ENCODE measurements at regions of chr19 and their contacts with region 1.

Region 1: GRCh38 chr19:34145741-34146202 is 26.5 kb upstream of the LSM14A start:
- DNase-seq: no peak
- H3K4me3 ChIP-seq: no peak overlapping the region
- H3K27ac ChIP-seq: no peak overlapping the region
- H3K4me1 ChIP-seq: no peaks in the 10 kb centered on the region
- H3K27me3 ChIP-seq: no peaks in the 10 kb centered on the region
- CTCF ChIP-seq: peak; percentile 56 to 80 (median 73)
- POLR2A ChIP-seq: no peak

Region 2: GRCh38 chr19:34041925-34042521 is 103.7 kb before region 1 on chr19:
- intact Hi-C with region 1: loop called (anchors 10 kb)
- DNase-seq: peak; percentile 87
- H3K4me3 ChIP-seq: no peak overlapping the region
- H3K27ac ChIP-seq: no peak overlapping the region
- H3K4me1 ChIP-seq: peaks cover 0 to 6% (median 0%) of the 10 kb centered on the region in 6 donors
- H3K27me3 ChIP-seq: peaks cover 0 to 2% (median 0%) of the 10 kb centered on the region in 7 donors
- CTCF ChIP-seq: peak; percentile 19 to 88 (median 74)
- POLR2A ChIP-seq: no peak

Region 3: GRCh38 chr19:34082289-34083077 is 63.3 kb before region 1 on chr19:
- intact Hi-C with region 1: no loop called
- DNase-seq: no peak
- H3K4me3 ChIP-seq: no peak overlapping the region
- H3K27ac ChIP-seq: no peak overlapping the region
- H3K4me1 ChIP-seq: no peaks in the 10 kb centered on the region
- H3K27me3 ChIP-seq: peaks cover 0 to 18% (median 0%) of the 10 kb centered on the region in 7 donors
- CTCF ChIP-seq: no peak
- POLR2A ChIP-seq: no peak

Region 4: GRCh38 chr19:34201133-34201532 is 55.4 kb after region 1 on chr19:
- intact Hi-C with region 1: no loop called
- DNase-seq: no peak
- H3K4me3 ChIP-seq: no peak overlapping the region
- H3K27ac ChIP-seq: peak overlapping the region in 3 of 8 donors; percentile 20 to 41 (median 36)
- H3K4me1 ChIP-seq: peaks cover 0 to 25% (median 0%) of the 10 kb centered on the region in 6 donors
- H3K27me3 ChIP-seq: no peaks in the 10 kb centered on the region
- CTCF ChIP-seq: no peak
- POLR2A ChIP-seq: no peak

Region 5: GRCh38 chr19:34217952-34218817 is 72.4 kb after region 1 on chr19:
- intact Hi-C with region 1: no loop called
- DNase-seq: no peak
- H3K4me3 ChIP-seq: no peak overlapping the region
- H3K27ac ChIP-seq: peak overlapping the region in 6 of 8 donors; percentile 10 to 67 (median 40)
- H3K4me1 ChIP-seq: peaks cover 14 to 45% (median 24%) of the 10 kb centered on the region in 6 donors
- H3K27me3 ChIP-seq: no peaks in the 10 kb centered on the region
- CTCF ChIP-seq: no peak
- POLR2A ChIP-seq: no peak

Region 6: GRCh38 chr19:34459623-34460022 is 313.9 kb after region 1 on chr19:
- intact Hi-C with region 1: no loop called
- DNase-seq: no peak
- H3K4me3 ChIP-seq: no peak overlapping the region
- H3K27ac ChIP-seq: no peak overlapping the region
- H3K4me1 ChIP-seq: no peaks in the 10 kb centered on the region
- H3K27me3 ChIP-seq: no peaks in the 10 kb centered on the region
- CTCF ChIP-seq: no peak
- POLR2A ChIP-seq: no peak